Right ventricle myocardium inferior (tissue), 1 donor: ENCODE measurements at regions of chr6 and their contacts with region 1.

Region 1: DNA sequence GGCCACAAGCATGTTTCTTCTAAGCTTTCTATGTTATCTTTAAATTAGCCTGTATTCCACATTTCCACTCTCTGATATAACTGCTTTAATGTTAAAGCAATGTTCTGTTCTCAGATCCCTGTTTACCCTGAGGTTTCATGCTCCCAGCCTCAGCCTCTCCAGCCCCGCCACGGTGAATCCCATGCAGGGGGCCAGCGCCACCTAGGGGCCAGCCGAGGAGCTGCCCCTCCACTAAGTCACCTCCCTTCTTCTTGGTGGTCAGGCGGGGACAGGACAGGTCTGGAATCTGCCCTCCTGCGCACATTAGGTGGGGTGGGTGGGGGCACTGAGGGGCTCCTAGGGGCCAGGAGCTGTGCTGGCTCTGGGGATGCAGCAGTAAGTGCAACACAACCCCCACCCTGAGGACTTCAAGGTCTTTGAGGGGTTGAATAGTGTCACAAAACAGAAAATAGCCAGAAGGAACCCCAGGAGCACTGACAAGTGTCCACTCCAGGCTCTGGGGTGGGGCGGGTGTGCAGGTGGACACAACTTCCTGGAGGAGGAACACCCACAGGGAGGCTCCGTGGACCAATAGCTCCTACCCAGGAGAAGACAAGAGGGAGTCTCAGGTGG is 61.6 kb downstream of the RAB44 start:
- DNase-seq: peak; percentile 91
- ATAC-seq: peak; percentile 87

Region 2: GRCh38 chr6:36623547-36624459 is 135.5 kb before region 1 on chr6:
- intact Hi-C with region 1: loop called (anchors 2 kb)
- DNase-seq: peak; percentile 90
- ATAC-seq: peak; percentile 33

Region 3: DNA sequence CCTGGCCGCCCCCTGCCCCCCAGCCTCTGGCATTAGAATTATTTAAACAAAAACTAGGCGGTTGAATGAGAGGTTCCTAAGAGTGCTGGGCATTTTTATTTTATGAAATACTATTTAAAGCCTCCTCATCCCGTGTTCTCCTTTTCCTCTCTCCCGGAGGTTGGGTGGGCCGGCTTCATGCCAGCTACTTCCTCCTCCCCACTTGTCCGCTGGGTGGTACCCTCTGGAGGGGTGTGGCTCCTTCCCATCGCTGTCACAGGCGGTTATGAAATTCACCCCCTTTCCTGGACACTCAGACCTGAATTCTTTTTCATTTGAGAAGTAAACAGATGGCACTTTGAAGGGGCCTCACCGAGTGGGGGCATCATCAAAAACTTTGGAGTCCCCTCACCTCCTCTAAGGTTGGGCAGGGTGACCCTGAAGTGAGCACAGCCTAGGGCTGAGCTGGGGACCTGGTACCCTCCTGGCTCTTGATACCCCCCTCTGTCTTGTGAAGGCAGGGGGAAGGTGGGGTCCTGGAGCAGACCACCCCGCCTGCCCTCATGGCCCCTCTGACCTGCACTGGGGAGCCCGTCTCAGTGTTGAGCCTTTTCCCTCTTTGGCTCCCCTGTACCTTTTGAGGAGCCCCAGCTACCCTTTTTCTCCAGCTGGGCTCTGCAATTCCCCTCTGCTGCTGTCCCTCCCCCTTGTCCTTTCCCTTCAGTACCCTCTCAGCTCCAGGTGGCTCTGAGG is 73.2 kb before region 1 on chr6:
- intact Hi-C with region 1: loop called (anchors 5 kb)
- DNase-seq: peak; percentile 78
- ATAC-seq: peak; percentile 39